ENCODE measurements at regions of chr4 and their contacts with region 1.

Region 1: DNA sequence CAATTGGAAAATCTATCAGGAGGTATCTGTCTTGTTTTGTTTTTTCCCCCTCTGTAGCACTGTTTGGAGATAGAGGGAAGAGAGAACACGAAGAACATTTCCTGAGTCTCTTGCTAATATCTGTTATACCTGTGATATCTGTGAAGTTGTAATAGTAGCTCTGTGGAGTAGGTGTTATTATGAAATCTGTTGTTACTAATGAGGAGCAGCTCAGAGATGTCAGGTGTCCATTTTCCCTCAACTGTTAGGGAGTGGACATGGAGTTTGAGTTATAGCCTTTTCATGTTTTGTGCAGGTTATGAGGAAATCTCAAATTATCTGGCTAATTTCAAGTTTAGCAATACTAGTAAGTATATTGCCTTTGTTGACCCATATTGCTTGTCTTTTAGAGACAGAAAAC is 52.4 kb downstream of the SEC24B start:
- DNase-seq: no peak
- ATAC-seq: no peak
- H3K4me3 ChIP-seq: no peak overlapping the region
- H3K4me3 Mint-ChIP-seq: no peak overlapping the region
- H3K27ac ChIP-seq: no peak overlapping the region
- H3K27ac Mint-ChIP-seq: no peak overlapping the region
- H3K4me1 ChIP-seq: no peaks in the 10 kb centered on the region
- H3K4me1 Mint-ChIP-seq: peaks cover 31 to 42% (median 38%) of the 10 kb centered on the region in 3 donors
- H3K27me3 ChIP-seq: no peaks in the 10 kb centered on the region
- H3K27me3 Mint-ChIP-seq: no peaks in the 10 kb centered on the region

Region 2: DNA sequence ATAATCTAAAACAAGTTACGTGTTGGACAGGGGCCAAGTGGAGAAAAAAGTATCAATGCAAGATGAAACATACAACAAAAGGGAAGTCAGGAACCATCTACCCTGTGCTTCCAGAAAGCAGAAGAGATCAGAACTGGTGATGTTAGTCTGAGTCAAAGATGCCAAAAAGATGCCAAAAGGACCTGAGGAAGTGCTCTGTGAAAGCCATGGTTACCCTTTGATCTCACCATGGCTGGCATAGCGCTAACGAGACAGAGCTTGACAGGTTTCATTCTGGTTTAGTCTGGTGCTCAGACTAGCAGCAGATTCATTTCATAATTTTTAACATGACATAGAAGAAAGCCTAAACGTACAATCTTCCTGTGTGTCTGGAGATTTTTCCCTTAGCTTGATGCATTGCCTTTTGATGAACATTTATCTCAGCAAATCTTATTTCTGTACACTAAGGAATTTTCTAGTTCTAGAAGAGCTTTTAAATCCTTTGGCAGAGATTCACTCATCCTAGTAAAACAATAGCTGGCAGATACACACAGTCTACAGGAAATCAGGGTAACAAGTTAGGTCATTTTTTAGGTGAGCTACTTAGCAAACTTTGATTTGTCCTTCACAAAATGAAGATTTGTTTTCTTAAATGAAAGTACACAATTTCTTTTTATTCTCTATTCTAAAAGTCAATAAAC is 271.2 kb before region 1 on chr4:
- CTCF ChIA-PET with region 1: no interaction called
- POLR2A ChIA-PET with region 1: no interaction called
- DNase-seq: no peak
- ATAC-seq: no peak
- H3K4me3 ChIP-seq: no peak overlapping the region
- H3K4me3 Mint-ChIP-seq: no peak overlapping the region
- H3K27ac ChIP-seq: no peak overlapping the region
- H3K27ac Mint-ChIP-seq: no peak overlapping the region
- H3K4me1 ChIP-seq: no peaks in the 10 kb centered on the region
- H3K4me1 Mint-ChIP-seq: no peaks in the 10 kb centered on the region
- H3K27me3 ChIP-seq: no peaks in the 10 kb centered on the region
- H3K27me3 Mint-ChIP-seq: peaks cover 0 to 6% of the 10 kb centered on the region in 2 donors

Region 3: GRCh38 chr4:109588176-109588575 is 102.2 kb after region 1 on chr4:
- CTCF ChIA-PET with region 1: interaction called in 1 of 2 experiments, 3 read pairs
- POLR2A ChIA-PET with region 1: interaction called in 1 of 2 experiments, 11 read pairs
- DNase-seq: peak in 12 of 35 experiments; percentile 3 to 47 (median 14)
- ATAC-seq: peak; percentile 80 to 90 (median 82)
- H3K4me3 ChIP-seq: no peak overlapping the region
- H3K4me3 Mint-ChIP-seq: peak overlapping the region in 2 of 3 donors; percentile 14 to 52
- H3K27ac ChIP-seq: no peak overlapping the region
- H3K27ac Mint-ChIP-seq: peak overlapping the region; percentile 59 to 84
- H3K4me1 ChIP-seq: peaks cover 18 to 27% of the 10 kb centered on the region in 2 experiments
- H3K4me1 Mint-ChIP-seq: peaks cover 86 to 94% (median 94%) of the 10 kb centered on the region in 3 donors
- H3K27me3 ChIP-seq: no peaks in the 10 kb centered on the region
- H3K27me3 Mint-ChIP-seq: no peaks in the 10 kb centered on the region

Measured in T-cell (primary cell).